ENCODE measurements at regions of chr7 and their contacts with region 1.

Region 1: GRCh38 chr7:135672560-135673359 is 10.4 kb downstream of the STMP1 start:
- DNase-seq: no peak
- ATAC-seq: peak; percentile 90
- H3K4me3 ChIP-seq: no peak overlapping the region
- H3K27ac ChIP-seq: no peak overlapping the region
- H3K4me1 ChIP-seq: peaks cover 3% of the 10 kb centered on the region; the same call in 1 of the 2 replicates
- H3K27me3 ChIP-seq: no peaks in the 10 kb centered on the region
- CTCF ChIP-seq: peak; percentile 80

Region 2: DNA sequence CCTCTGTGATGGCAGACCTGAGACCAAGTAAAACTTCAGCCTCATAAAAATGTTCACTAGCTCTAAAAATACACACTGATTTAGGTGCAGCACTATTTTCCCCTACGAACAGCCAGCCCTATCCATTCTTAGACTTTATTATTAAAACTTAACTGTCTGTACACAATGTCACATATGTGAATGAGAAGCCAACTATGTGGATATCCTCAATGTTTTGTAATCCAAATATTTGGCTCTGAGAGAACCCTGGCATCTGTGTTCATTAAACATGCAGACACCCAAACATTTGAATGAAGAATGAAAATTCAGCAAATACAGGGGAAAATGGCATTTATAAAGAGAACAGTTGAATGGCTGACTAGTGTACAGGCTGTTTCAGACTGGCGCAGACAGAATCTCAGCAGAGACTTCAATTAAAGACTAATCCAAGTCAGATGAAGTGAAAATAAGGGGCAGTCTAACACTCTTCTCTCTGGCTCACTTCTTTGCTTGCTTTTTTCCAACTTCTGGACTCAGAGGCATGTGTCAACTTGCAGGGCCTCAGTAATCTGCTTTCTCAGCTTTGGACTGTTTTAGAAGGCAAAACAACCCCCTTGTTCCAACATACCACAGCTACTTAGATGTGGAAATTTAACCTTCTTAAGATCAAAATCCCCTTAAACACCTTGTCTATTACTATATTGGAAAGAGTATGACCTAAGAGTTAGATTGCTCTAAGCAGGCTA is 123.2 kb after region 1 on chr7:
- CTCF ChIA-PET with region 1: interaction called, 7 read pairs
- POLR2A ChIA-PET with region 1: no interaction called
- in situ Hi-C with region 1: no loop called
- intact Hi-C with region 1: loop called (anchors 5 kb)
- DNase-seq: no peak
- ATAC-seq: no peak
- H3K4me3 ChIP-seq: no peak overlapping the region
- H3K27ac ChIP-seq: no peak overlapping the region
- H3K4me1 ChIP-seq: peaks cover 5% of the 10 kb centered on the region; the same call in 1 of the 2 replicates
- H3K27me3 ChIP-seq: peaks cover 10% of the 10 kb centered on the region
- CTCF ChIP-seq: no peak

Region 3: DNA sequence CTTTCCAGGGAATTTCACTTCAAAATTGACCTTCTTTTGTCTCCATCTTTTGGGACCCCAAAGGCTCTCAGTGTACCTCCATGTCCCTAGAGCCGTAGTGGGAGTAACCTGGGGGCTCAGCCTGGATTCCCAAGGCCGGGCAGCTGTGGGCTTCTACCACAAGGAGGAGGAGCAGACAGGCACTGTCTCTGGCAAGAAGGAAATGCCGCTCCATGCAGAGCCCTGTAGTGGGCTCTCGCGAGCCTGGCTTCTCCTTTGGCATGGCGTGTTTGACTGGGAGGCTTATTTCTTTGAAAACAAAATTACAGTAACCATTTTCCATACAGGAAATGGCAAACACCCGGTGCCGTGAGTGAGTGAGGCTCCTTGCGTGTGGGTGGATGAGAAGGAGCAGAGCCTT is 152.6 kb after region 1 on chr7:
- CTCF ChIA-PET with region 1: no interaction called
- POLR2A ChIA-PET with region 1: no interaction called
- in situ Hi-C with region 1: no loop called
- intact Hi-C with region 1: no loop called
- DNase-seq: no peak
- ATAC-seq: no peak
- H3K4me3 ChIP-seq: no peak overlapping the region
- H3K27ac ChIP-seq: no peak overlapping the region
- H3K4me1 ChIP-seq: no peaks in the 10 kb centered on the region
- H3K27me3 ChIP-seq: peaks cover 15% of the 10 kb centered on the region
- CTCF ChIP-seq: no peak